CD4-positive, alpha-beta memory T cell (primary cell): ENCODE measurements at regions of chr20 and their contacts with region 1.

Region 1: DNA sequence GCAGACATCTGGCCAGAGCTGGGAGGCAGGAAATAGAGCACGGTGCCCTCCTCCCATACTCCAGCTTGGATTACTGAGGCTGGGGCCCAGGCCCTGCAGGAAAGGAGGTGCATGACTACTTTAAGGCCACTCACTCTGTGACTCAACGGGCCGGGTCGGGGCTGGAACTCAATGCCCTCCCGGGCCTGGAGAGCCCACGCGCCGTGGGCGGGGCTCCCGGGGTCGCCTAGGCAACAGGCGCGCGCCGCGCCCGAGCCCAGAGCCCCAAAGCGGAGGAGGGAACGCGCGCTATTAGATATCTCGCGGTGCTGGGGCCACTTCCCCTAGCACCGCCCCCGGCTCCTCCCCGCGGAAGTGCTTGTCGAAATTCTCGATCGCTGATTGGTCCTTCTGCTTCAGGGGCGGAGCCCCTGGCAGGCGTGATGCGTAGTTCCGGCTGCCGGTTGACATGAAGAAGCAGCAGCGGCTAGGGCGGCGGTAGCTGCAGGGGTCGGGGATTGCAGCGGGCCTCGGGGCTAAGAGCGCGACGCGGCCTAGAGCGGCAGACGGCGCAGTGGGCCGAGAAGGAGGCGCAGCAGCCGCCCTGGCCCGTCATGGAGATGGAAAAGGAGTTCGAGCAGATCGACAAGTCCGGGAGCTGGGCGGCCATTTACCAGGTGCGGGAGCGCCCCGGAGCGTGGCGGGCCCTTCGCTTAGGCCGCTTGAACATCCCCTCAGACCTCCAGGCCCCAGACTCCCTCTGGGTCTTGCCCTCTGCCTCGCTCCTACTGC is at the start of gene PTPN1:
- DNase-seq: peak; percentile 98 to 99 (median 99)
- H3K4me3 ChIP-seq: peak within 1 kb of the TSS; percentile 73 to 91
- H3K4me3 Mint-ChIP-seq: peak within 1 kb of the TSS; percentile 94 to 98 (median 96)
- H3K27ac ChIP-seq: peak within 1 kb of the TSS; percentile 91
- H3K27ac Mint-ChIP-seq: peak within 1 kb of the TSS; percentile 93 to 98 (median 96)
- H3K4me1 ChIP-seq: peaks cover 50% of the 10 kb centered on the region
- H3K4me1 Mint-ChIP-seq: peaks cover 35 to 56% (median 45%) of the 10 kb centered on the region in 4 donors
- H3K27me3 ChIP-seq: no peaks in the 10 kb centered on the region
- H3K27me3 Mint-ChIP-seq: no peaks in the 10 kb centered on the region
- total RNA-seq, gene PTPN1: 59.5 to 61.5 TPM

Region 2: DNA sequence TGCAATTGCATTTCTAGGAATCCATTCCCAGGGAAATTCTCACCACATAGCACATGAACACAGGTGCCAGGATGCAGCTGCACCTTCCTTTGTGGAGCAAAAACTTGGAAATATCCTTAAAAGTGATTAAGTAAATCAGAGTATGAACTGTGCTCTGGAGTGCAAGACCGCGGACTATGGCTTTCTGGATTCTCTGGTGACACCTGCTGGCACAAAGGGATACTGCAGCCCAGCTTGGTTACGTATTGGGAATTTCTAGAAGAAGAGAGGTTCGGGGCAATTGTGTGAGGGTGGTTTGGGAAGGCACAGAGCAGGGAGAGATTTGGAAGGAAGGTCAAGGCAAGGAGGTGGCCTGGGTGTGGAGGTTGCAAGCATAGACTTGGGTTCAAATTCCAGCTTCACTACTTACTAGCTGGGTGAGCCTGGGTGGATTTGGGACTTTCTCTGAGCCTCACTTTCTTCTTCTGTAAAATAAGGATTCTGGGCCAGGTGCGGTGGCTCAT is 340.7 kb before region 1 on chr20:
- CTCF ChIA-PET with region 1: no interaction called
- POLR2A ChIA-PET with region 1: no interaction called
- intact Hi-C with region 1: no loop called
- DNase-seq: peak; percentile 68 to 79 (median 70)
- H3K4me3 ChIP-seq: no peak overlapping the region
- H3K4me3 Mint-ChIP-seq: no peak overlapping the region
- H3K27ac ChIP-seq: no peak overlapping the region
- H3K27ac Mint-ChIP-seq: peak overlapping the region in 1 of 7 donors; percentile 12
- H3K4me1 ChIP-seq: peaks cover 9% of the 10 kb centered on the region
- H3K4me1 Mint-ChIP-seq: peaks cover 6 to 13% (median 10%) of the 10 kb centered on the region in 4 donors
- H3K27me3 ChIP-seq: no peaks in the 10 kb centered on the region
- H3K27me3 Mint-ChIP-seq: peaks cover 4 to 11% of the 10 kb centered on the region in 2 donors

Region 3: GRCh38 chr20:50189681-50190582 is 320.2 kb before region 1 on chr20:
- CTCF ChIA-PET with region 1: no interaction called
- POLR2A ChIA-PET with region 1: interaction called, 11 read pairs
- intact Hi-C with region 1: loop called (anchors 2 kb)
- DNase-seq: peak; percentile 79 to 86 (median 82)
- H3K4me3 ChIP-seq: peak overlapping the region in 1 of 2 donors; percentile 76
- H3K4me3 Mint-ChIP-seq: peak overlapping the region; percentile 38 to 68 (median 58)
- H3K27ac ChIP-seq: peak overlapping the region; percentile 49
- H3K27ac Mint-ChIP-seq: peak overlapping the region; percentile 10 to 75 (median 36)
- H3K4me1 ChIP-seq: peaks cover 30% of the 10 kb centered on the region
- H3K4me1 Mint-ChIP-seq: peaks cover 7 to 39% (median 23%) of the 10 kb centered on the region in 4 donors
- H3K27me3 ChIP-seq: no peaks in the 10 kb centered on the region
- H3K27me3 Mint-ChIP-seq: peaks cover 6 to 10% of the 10 kb centered on the region in 2 donors

Region 4: GRCh38 chr20:50484276-50484976 is 25.7 kb before region 1 on chr20:
- CTCF ChIA-PET with region 1: interaction called, 25 read pairs
- POLR2A ChIA-PET with region 1: interaction called, 27 read pairs
- intact Hi-C with region 1: loop called (anchors 2 kb)
- DNase-seq: no peak
- H3K4me3 ChIP-seq: peak overlapping the region in 1 of 2 donors; percentile 68
- H3K4me3 Mint-ChIP-seq: peak overlapping the region; percentile 13 to 98 (median 96)
- H3K27ac ChIP-seq: peak overlapping the region; percentile 81
- H3K27ac Mint-ChIP-seq: peak overlapping the region; percentile 85 to 100 (median 97)
- H3K4me1 ChIP-seq: peaks cover 18% of the 10 kb centered on the region
- H3K4me1 Mint-ChIP-seq: peaks cover 16 to 26% (median 24%) of the 10 kb centered on the region in 4 donors
- H3K27me3 ChIP-seq: no peaks in the 10 kb centered on the region
- H3K27me3 Mint-ChIP-seq: peaks cover 0 to 4% of the 10 kb centered on the region in 2 donors

Region 5: DNA sequence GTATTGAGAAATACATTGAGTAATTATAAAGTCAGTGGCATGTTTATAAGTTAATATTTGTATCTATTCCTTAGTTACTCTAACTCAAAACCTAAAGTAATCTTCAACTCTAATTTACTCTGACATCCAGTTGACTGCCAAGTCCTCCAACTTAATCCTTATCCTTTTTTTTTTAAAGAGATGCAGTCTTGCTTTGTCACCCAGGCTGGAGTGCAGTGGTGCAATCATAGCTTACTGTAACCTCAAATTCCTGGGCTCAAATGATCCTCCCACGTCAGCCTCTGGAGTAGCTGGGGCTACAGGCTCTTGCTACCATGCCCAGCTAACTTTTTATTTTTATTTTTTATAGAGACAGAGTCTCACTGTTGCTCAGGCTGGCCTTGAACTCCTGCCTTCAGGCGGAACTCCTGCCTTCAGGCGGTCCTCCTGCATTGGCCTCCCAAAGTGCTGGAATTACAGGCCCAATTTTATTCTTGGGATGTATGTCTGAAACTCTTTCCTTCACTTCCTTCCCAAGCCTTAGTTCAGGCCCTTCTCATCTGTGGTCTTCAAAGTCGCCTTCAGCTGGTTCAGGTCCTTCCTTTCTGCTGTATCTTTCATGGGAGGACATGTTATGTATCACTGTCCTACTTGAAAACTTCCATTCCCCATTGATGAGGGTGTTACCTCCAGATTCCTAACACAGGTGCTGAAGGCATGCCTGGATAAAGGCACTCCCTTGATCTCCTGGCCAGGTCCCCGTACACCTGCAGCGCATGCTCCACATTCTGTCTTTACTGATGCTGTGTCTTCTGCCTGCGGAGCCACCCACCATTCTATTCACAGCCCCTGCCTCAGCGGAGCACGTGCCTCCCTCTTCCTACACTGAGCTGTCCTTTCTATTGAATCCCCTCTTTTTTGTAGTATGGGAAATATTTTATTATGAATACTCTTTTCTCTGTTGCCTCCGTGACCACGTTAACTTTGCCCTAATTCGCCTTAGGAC is 24.7 kb after region 1 on chr20:
- CTCF ChIA-PET with region 1: interaction called, 6 read pairs
- POLR2A ChIA-PET with region 1: interaction called, 10 read pairs
- intact Hi-C with region 1: no loop called
- DNase-seq: no peak
- H3K4me3 ChIP-seq: no peak overlapping the region
- H3K4me3 Mint-ChIP-seq: peak overlapping the region in 3 of 8 donors; percentile 9 to 53 (median 17)
- H3K27ac ChIP-seq: no peak overlapping the region
- H3K27ac Mint-ChIP-seq: peak overlapping the region in 1 of 7 donors; percentile 54
- H3K4me1 ChIP-seq: peaks cover 88% of the 10 kb centered on the region
- H3K4me1 Mint-ChIP-seq: peaks cover 53 to 83% (median 67%) of the 10 kb centered on the region in 4 donors
- H3K27me3 ChIP-seq: no peaks in the 10 kb centered on the region
- H3K27me3 Mint-ChIP-seq: no peaks in the 10 kb centered on the region

Region 6: GRCh38 chr20:50561379-50562078 is 51.4 kb after region 1 on chr20:
- CTCF ChIA-PET with region 1: interaction called, 244 read pairs
- POLR2A ChIA-PET with region 1: interaction called, 7 read pairs
- intact Hi-C with region 1: no loop called
- DNase-seq: no peak
- H3K4me3 ChIP-seq: no peak overlapping the region
- H3K4me3 Mint-ChIP-seq: peak overlapping the region in 4 of 8 donors; percentile 14 to 75 (median 52)
- H3K27ac ChIP-seq: no peak overlapping the region
- H3K27ac Mint-ChIP-seq: peak overlapping the region; percentile 54 to 85 (median 77)
- H3K4me1 ChIP-seq: peaks cover 50% of the 10 kb centered on the region
- H3K4me1 Mint-ChIP-seq: peaks cover 38 to 77% (median 60%) of the 10 kb centered on the region in 4 donors
- H3K27me3 ChIP-seq: no peaks in the 10 kb centered on the region
- H3K27me3 Mint-ChIP-seq: no peaks in the 10 kb centered on the region

Region 7: GRCh38 chr20:50575847-50576720 is 66.0 kb after region 1 on chr20:
- CTCF ChIA-PET with region 1: interaction called, 244 read pairs
- POLR2A ChIA-PET with region 1: interaction called, 9 read pairs
- intact Hi-C with region 1: no loop called
- DNase-seq: peak; percentile 48 to 59 (median 57)
- H3K4me3 ChIP-seq: no peak overlapping the region
- H3K4me3 Mint-ChIP-seq: no peak overlapping the region
- H3K27ac ChIP-seq: no peak overlapping the region
- H3K27ac Mint-ChIP-seq: peak overlapping the region in 4 of 7 donors; percentile 47 to 88 (median 82)
- H3K4me1 ChIP-seq: peaks cover 10% of the 10 kb centered on the region
- H3K4me1 Mint-ChIP-seq: peaks cover 12 to 45% (median 29%) of the 10 kb centered on the region in 4 donors
- H3K27me3 ChIP-seq: no peaks in the 10 kb centered on the region
- H3K27me3 Mint-ChIP-seq: no peaks in the 10 kb centered on the region

Region 8: GRCh38 chr20:50929299-50930138 is 419.4 kb after region 1 on chr20:
- CTCF ChIA-PET with region 1: no interaction called
- POLR2A ChIA-PET with region 1: no interaction called
- intact Hi-C with region 1: loop called (anchors 1 kb)
- DNase-seq: peak; percentile 90 to 96 (median 92)
- H3K4me3 ChIP-seq: peak overlapping the region; percentile 39 to 49
- H3K4me3 Mint-ChIP-seq: peak overlapping the region; percentile 86 to 96 (median 92)
- H3K27ac ChIP-seq: peak overlapping the region; percentile 48
- H3K27ac Mint-ChIP-seq: peak overlapping the region; percentile 92 to 100 (median 95)
- H3K4me1 ChIP-seq: peaks cover 64% of the 10 kb centered on the region
- H3K4me1 Mint-ChIP-seq: peaks cover 37 to 62% (median 50%) of the 10 kb centered on the region in 4 donors
- H3K27me3 ChIP-seq: no peaks in the 10 kb centered on the region
- H3K27me3 Mint-ChIP-seq: no peaks in the 10 kb centered on the region